PC-9 (cell line): ENCODE measurements at regions of chr20 and their contacts with region 1.

Region 1: DNA sequence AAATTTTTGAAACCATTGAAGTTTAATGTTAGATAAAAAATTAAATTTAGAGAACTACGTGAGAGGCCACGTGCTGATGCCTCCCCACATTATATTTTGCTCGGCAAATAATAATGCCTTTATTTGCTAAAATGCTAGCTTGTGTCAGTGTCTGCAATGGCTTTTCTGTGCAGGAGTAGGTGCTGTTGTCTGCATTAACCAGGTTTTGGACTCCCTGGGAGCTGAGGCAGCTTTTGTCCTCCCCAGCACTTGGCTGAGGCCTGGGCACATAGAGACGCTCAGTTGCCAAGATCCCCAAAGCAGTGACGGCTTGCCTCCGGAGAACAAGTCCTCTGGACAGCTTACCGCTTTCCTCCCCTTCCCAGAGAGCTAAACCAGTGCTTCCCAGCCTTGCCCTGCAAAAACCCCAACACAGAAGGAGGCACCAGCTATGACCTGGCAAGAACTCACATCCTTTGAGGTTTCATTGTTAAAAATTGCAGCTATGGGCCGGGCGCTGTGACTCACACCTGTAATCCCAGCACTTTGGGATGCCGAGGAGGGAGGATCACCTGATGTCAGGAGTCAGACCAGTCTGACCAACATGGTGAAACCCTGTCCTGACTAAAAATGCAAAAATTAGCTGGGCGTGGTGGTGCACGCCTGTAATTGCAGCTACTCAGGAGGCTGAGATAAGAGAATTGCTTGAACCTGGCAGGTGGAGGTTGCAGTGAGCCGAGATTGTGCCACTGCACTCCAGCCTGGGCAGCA is 59.9 kb downstream of the KAT14 start:
- DNase-seq: peak; percentile 91 to 96
- H3K4me3 ChIP-seq: peak overlapping the region; percentile 26; the same call in 1 of the 2 replicates
- H3K27ac ChIP-seq: peak overlapping the region; percentile 86
- H3K4me1 ChIP-seq: peaks cover 22% of the 10 kb centered on the region
- H3K27me3 ChIP-seq: no peaks in the 10 kb centered on the region
- CTCF ChIP-seq: peak; percentile 43

Region 2: DNA sequence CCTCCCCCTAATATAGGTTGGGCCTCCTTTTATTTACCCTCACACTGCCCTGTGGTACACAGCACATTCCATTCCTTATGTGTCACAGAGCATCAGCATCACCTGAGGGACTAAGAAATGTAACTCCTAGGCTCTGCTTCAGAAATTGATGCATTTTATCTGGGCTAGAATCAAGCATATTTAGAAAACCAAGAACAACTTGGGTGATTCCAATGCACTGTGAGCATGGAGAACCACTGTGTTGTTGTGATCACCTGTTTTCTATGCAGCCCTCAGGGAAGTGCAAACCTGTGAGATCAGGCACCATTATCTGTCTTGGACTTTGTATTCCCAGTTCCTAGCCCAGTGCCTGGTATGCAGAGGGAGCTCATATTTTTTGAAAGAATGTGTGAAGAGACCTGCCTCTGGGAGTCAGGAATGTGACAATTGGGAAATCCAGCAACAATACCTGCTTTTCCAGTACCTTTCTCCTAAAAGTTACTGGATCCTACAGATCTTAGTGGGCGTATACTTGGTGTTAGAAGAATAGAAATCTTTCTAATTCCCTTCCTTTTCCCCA is 52.9 kb before region 1 on chr20:
- CTCF ChIA-PET with region 1: no interaction called
- POLR2A ChIA-PET with region 1: interaction called, 5 read pairs
- intact Hi-C with region 1: loop called (anchors 2 kb)
- DNase-seq: peak; percentile 64 to 94
- H3K4me3 ChIP-seq: peak overlapping the region; percentile 55; the same call in 1 of the 2 replicates
- H3K27ac ChIP-seq: peak overlapping the region; percentile 93
- H3K4me1 ChIP-seq: peaks cover 62% of the 10 kb centered on the region
- H3K27me3 ChIP-seq: no peaks in the 10 kb centered on the region
- CTCF ChIP-seq: no peak

Region 3: DNA sequence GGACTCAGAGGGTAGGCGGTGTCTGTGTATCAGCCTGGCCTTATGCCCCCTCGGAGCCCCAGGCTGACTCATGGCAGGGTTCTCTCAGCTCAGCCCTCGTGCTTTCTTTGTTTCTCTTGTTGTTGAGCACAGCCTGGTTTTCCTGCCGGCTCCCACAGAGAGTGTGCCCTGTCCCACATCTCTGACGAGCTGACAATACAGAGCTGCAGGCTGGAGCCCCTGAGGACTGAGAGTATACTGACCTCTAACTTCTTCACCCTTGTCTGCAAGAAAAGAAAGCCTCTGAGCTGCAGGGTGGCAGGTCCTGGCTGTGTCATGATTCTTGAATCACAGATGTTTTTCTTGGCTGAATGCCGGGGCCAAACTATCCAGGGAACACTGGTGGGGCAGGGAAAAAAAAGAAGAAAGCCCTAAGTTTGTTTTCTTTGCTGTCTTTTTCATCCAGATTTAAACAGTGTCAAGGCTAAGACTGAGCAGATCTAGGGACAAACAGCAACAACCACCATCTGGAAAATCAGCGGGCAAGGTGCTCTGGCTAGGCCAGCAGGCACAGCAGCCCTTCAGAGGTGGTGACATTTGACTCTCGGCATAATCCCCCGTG is 27.5 kb after region 1 on chr20:
- CTCF ChIA-PET with region 1: interaction called, 6 read pairs
- POLR2A ChIA-PET with region 1: interaction called, 3 read pairs
- intact Hi-C with region 1: loop called (anchors 1 kb)
- DNase-seq: peak; percentile 68 to 77
- H3K4me3 ChIP-seq: peak overlapping the region; percentile 33; the same call in 1 of the 2 replicates
- H3K27ac ChIP-seq: peak overlapping the region; percentile 49
- H3K4me1 ChIP-seq: peaks cover 37% of the 10 kb centered on the region
- H3K27me3 ChIP-seq: no peaks in the 10 kb centered on the region
- CTCF ChIP-seq: no peak

Region 4: DNA sequence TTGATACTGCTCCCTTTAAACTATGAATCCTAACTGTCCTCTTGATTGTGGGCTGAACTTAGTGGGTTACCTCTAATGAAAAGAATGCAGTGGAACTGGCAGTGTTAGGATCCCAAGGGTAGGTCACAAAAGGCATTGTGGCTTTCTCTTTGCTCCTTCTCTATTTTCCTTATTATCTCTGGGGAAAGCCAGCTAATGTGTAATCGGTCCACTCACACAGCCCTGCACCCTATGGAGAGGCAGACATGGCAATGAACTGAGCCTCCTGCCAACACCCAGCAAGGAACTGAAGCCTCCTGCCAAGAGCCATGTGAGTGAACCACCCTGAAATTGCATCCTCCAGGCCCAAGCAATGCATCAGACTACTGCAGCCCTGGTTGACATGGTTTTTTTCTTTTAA is 66.2 kb after region 1 on chr20:
- CTCF ChIA-PET with region 1: interaction called, 7 read pairs
- POLR2A ChIA-PET with region 1: interaction called, 6 read pairs
- intact Hi-C with region 1: loop called (anchors 1 kb)
- DNase-seq: peak; percentile 80 to 94
- H3K4me3 ChIP-seq: no peak overlapping the region
- H3K27ac ChIP-seq: peak overlapping the region; percentile 58
- H3K4me1 ChIP-seq: peaks cover 42% of the 10 kb centered on the region
- H3K27me3 ChIP-seq: no peaks in the 10 kb centered on the region
- CTCF ChIP-seq: no peak